ENCODE measurements at regions of chr1 and their contacts with region 1.

Region 1: DNA sequence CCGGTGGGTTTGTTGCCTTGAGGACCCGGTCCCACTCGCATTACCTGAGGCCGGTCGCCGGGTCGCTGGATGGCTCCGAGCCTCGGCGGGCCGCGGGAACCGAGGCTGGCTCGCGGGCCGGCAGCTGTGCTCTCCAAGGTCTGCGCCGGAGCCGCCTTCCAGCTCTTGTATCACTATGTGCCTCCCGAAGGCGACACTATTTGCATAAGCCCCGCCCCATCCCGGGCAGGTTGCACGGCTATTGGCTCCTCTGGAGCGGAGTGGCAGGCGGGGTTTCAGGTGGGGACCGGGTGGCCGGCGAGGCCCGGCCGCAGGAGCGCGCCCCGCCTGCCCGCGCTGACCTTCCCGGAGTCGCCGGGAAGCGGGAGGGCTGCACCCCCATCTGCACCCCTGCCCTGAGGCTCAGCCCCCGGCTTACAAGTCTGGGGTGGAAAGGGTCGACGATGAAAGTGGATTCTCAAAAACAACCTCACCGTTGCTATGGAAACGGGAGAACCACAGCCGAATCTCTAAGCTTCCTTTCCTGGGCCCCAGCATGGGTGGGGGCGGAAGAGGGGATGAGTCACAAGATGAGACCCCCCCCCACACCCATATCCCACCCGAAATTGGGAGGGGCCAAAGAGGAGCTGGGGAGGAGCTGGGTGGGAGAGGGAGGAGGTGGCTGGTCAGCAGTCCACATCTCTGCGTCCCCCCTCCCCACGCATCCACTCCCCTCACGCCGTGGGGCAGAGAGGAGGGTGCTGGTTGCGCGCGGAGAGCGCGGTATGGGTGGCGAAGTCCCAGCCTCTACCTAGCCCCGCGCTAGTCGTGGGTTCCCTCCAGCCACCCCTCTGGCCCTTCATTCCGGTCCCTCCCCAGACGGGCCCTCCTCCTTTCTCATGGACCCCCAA is at the start of gene HPCAL4:
- DNase-seq: peak; percentile 81 to 96 (median 90)
- ATAC-seq: peak; percentile 89
- H3K4me3 ChIP-seq: peak within 1 kb of the TSS; percentile 67
- H3K4me3 Mint-ChIP-seq: peak within 1 kb of the TSS; percentile 91
- H3K27ac ChIP-seq: peak within 1 kb of the TSS; percentile 17 to 61
- H3K27ac Mint-ChIP-seq: peak within 1 kb of the TSS; percentile 82
- H3K4me1 ChIP-seq: peaks cover 40% of the 10 kb centered on the region
- H3K4me1 Mint-ChIP-seq: peaks cover 48% of the 10 kb centered on the region
- H3K27me3 ChIP-seq: peaks cover 0 to 12% of the 10 kb centered on the region in 2 experiments
- H3K27me3 Mint-ChIP-seq: peaks cover 15% of the 10 kb centered on the region
- CTCF ChIP-seq: no peak
- total RNA-seq, gene HPCAL4: 22.8 to 22.9 TPM

Region 2: GRCh38 chr1:39727221-39727931 is 35.9 kb after region 1 on chr1:
- CTCF ChIA-PET with region 1: no interaction called
- POLR2A ChIA-PET with region 1: no interaction called
- intact Hi-C with region 1: no loop called
- DNase-seq: no peak
- ATAC-seq: no peak
- H3K4me3 ChIP-seq: no peak overlapping the region
- H3K4me3 Mint-ChIP-seq: no peak overlapping the region
- H3K27ac ChIP-seq: no peak overlapping the region
- H3K27ac Mint-ChIP-seq: no peak overlapping the region
- H3K4me1 ChIP-seq: no peaks in the 10 kb centered on the region
- H3K4me1 Mint-ChIP-seq: no peaks in the 10 kb centered on the region
- H3K27me3 ChIP-seq: peaks cover 24 to 49% of the 10 kb centered on the region in 2 experiments
- H3K27me3 Mint-ChIP-seq: peaks cover 71% of the 10 kb centered on the region
- CTCF ChIP-seq: no peak

Region 3: DNA sequence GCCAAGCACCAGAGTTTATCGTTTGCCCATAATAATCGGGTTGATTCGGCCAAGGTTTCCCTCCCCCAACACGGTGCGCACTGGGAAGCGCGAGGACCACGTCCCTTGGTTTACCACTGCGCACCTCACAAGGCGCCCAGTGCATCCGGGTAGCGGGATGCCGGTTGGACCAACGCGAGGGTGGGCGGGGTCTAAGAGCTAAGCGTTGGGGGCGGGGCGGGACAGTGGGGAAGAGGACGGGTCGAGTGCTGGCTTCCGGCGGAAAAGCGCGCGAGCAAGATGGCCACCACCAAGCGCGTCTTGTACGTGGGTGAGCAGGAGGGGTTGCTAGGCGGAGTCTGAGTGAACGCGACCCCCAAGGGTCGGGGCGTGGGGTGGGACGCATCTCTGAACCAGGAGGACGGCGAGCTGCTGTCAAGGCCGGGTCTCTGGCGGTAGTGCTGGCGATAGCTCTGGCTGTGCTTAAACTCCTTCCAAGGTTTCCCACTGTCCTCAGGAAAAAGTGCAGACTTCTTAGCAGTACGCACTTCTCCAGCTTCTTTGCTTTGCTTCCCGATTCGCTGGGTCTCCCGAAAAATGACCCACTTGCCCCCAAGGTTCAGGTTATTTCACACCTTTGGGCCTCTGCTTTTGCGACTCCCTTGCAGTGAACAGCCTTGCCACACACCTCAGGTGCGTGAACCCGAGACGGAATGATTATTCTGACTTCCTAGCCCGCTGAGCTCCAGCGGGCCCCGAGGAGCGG is 47.3 kb after region 1 on chr1 and contains the start of gene PPIE:
- CTCF ChIA-PET with region 1: no interaction called
- POLR2A ChIA-PET with region 1: interaction called, 28 read pairs
- intact Hi-C with region 1: no loop called
- DNase-seq: peak; percentile 89 to 97 (median 95)
- ATAC-seq: peak; percentile 98
- H3K4me3 ChIP-seq: peak within 1 kb of the TSS; percentile 96
- H3K4me3 Mint-ChIP-seq: peak within 1 kb of the TSS; percentile 96
- H3K27ac ChIP-seq: peak within 1 kb of the TSS; percentile 71 to 81
- H3K27ac Mint-ChIP-seq: peak within 1 kb of the TSS; percentile 87
- H3K4me1 ChIP-seq: peaks cover 21% of the 10 kb centered on the region
- H3K4me1 Mint-ChIP-seq: peaks cover 34% of the 10 kb centered on the region
- H3K27me3 ChIP-seq: peaks cover 8 to 19% of the 10 kb centered on the region in 2 experiments
- H3K27me3 Mint-ChIP-seq: peaks cover 28% of the 10 kb centered on the region
- CTCF ChIP-seq: no peak
- total RNA-seq, gene PPIE: 45.0 to 46.7 TPM